Left lung (tissue), 14 donors: ENCODE measurements at regions of chr16 and their contacts with region 1.

Region 1: DNA sequence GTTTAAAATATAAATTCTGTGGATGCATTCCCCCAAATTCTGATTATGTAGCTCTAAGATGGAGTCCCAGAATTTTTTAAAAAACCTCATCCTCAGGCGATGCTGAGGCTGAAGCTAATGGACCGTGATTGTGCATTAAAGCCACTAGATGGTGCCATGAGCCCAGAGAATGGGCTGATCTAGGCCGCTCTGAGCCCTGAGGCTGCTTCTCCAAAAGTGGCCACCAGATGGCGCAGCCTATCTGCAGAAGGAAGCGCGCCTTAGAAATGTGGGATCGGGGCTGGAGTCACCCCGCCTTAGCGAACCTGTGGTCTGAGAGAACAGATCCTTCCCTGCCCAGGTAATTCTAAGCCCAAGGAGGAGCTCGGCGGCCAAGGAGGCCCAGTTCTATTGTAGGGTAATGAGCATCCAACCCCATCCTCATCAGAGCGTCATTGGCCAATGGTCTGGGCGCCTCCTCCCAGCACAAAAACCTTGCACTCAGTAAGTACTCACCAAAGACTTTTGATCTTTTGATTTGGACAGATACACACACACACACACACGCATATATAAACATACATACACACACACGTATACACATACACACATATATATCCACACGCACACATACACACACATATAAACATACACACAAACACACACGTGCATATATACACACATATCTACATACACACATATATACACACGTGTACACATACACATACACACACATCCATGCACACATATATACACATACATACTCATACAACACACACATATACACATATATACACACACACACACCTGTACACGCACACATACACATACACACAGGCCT is 13.7 kb upstream of the MMP2 start:
- DNase-seq: peak; percentile 87 to 93 (median 91)
- ATAC-seq: peak; percentile 99
- H3K4me3 ChIP-seq: no peak overlapping the region
- H3K27ac ChIP-seq: no peak overlapping the region
- H3K4me1 ChIP-seq: peaks cover 0 to 3% of the 10 kb centered on the region in 2 donors
- H3K27me3 ChIP-seq: no peaks in the 10 kb centered on the region
- CTCF ChIP-seq: peak; percentile 99 to 100

Region 2: DNA sequence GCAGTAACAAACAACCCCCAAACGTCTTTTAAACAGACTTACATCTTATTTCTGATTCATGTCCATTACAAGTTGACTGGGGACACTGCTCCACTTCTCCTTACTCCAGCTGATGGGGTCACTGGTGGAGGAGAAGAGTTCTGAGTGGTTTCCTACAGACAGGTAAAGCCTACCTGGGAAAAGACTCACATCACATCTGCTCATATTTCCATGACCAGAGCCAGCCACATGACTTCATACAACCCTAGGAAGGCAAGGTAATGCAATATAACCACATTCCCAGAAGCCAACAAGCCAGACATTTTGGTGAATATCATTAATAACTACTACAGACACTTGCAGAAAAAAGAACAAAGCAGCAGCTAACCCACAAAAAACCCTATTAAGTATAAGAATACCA is 231.8 kb before region 1 on chr16:
- intact Hi-C with region 1: no loop called
- DNase-seq: no peak
- ATAC-seq: no peak
- H3K4me3 ChIP-seq: no peak overlapping the region
- H3K27ac ChIP-seq: no peak overlapping the region
- H3K4me1 ChIP-seq: no peaks in the 10 kb centered on the region
- H3K27me3 ChIP-seq: peaks cover 0 to 3% of the 10 kb centered on the region in 2 donors
- CTCF ChIP-seq: no peak

Region 3: GRCh38 chr16:55398762-55399161 is 66.5 kb before region 1 on chr16:
- intact Hi-C with region 1: no loop called
- DNase-seq: no peak
- ATAC-seq: no peak
- H3K4me3 ChIP-seq: no peak overlapping the region
- H3K27ac ChIP-seq: no peak overlapping the region
- H3K4me1 ChIP-seq: no peaks in the 10 kb centered on the region
- H3K27me3 ChIP-seq: no peaks in the 10 kb centered on the region
- CTCF ChIP-seq: no peak

Region 4: GRCh38 chr16:55543472-55543871 is 78.2 kb after region 1 on chr16:
- intact Hi-C with region 1: loop called in 1 of 2 experiments (anchors 5 kb)
- DNase-seq: peak in 2 of 4 donors; percentile 46 to 57
- ATAC-seq: peak; percentile 78
- H3K4me3 ChIP-seq: no peak overlapping the region
- H3K27ac ChIP-seq: no peak overlapping the region
- H3K4me1 ChIP-seq: peaks cover 0 to 11% of the 10 kb centered on the region in 2 donors
- H3K27me3 ChIP-seq: no peaks in the 10 kb centered on the region
- CTCF ChIP-seq: peak in 1 of 2 donors; percentile 24

Region 5: GRCh38 chr16:55701442-55702319 is 236.4 kb after region 1 on chr16:
- intact Hi-C with region 1: loop called (anchors 5 to 10 kb)
- DNase-seq: peak in 3 of 4 donors; percentile 45 to 85 (median 53)
- ATAC-seq: peak; percentile 80
- H3K4me3 ChIP-seq: no peak overlapping the region
- H3K27ac ChIP-seq: no peak overlapping the region
- H3K4me1 ChIP-seq: no peaks in the 10 kb centered on the region
- H3K27me3 ChIP-seq: peaks cover 0 to 12% of the 10 kb centered on the region in 2 donors
- CTCF ChIP-seq: peak; percentile 26 to 40